Activated B cell treated with CpG ODN at 0.5 μM for 24 hours (primary cell): ENCODE measurements at regions of chr14 and their contacts with region 1.

Region 1: GRCh38 chr14:93939304-93940229 is 12.4 kb downstream of the FAM181A start:
- DNase-seq: peak; percentile 96
- ATAC-seq: peak; percentile 92
- H3K4me3 Mint-ChIP-seq: peak overlapping the region; percentile 69
- H3K27ac Mint-ChIP-seq: no peak overlapping the region
- H3K4me1 Mint-ChIP-seq: peaks cover 10% of the 10 kb centered on the region
- H3K27me3 Mint-ChIP-seq: peaks cover 5% of the 10 kb centered on the region
- CTCF ChIP-seq: peak; percentile 60

Region 2: GRCh38 chr14:93959239-93960107 is 19.9 kb after region 1 on chr14:
- CTCF ChIA-PET with region 1: interaction called, 126 read pairs
- POLR2A ChIA-PET with region 1: interaction called, 15 read pairs
- intact Hi-C with region 1: loop called (anchors 1 kb)
- DNase-seq: peak; percentile 81
- ATAC-seq: peak; percentile 75
- H3K4me3 Mint-ChIP-seq: peak overlapping the region; percentile 80
- H3K27ac Mint-ChIP-seq: peak overlapping the region; percentile 93
- H3K4me1 Mint-ChIP-seq: peaks cover 95% of the 10 kb centered on the region
- H3K27me3 Mint-ChIP-seq: no peaks in the 10 kb centered on the region
- CTCF ChIP-seq: no peak

Region 3: GRCh38 chr14:93989939-93990338 is 50.4 kb after region 1 on chr14:
- CTCF ChIA-PET with region 1: interaction called, 307 read pairs
- POLR2A ChIA-PET with region 1: no interaction called
- intact Hi-C with region 1: no loop called
- DNase-seq: no peak
- ATAC-seq: peak; percentile 70
- H3K4me3 Mint-ChIP-seq: no peak overlapping the region
- H3K27ac Mint-ChIP-seq: no peak overlapping the region
- H3K4me1 Mint-ChIP-seq: peaks cover 7% of the 10 kb centered on the region
- H3K27me3 Mint-ChIP-seq: peaks cover 24% of the 10 kb centered on the region
- CTCF ChIP-seq: no peak

Region 4: GRCh38 chr14:94036313-94037050 is 96.9 kb after region 1 on chr14:
- CTCF ChIA-PET with region 1: interaction called, 16 read pairs
- POLR2A ChIA-PET with region 1: no interaction called
- intact Hi-C with region 1: no loop called
- DNase-seq: peak; percentile 60
- ATAC-seq: peak; percentile 95
- H3K4me3 Mint-ChIP-seq: no peak overlapping the region
- H3K27ac Mint-ChIP-seq: no peak overlapping the region
- H3K4me1 Mint-ChIP-seq: no peaks in the 10 kb centered on the region
- H3K27me3 Mint-ChIP-seq: no peaks in the 10 kb centered on the region
- CTCF ChIP-seq: peak; percentile 21

Region 5: DNA sequence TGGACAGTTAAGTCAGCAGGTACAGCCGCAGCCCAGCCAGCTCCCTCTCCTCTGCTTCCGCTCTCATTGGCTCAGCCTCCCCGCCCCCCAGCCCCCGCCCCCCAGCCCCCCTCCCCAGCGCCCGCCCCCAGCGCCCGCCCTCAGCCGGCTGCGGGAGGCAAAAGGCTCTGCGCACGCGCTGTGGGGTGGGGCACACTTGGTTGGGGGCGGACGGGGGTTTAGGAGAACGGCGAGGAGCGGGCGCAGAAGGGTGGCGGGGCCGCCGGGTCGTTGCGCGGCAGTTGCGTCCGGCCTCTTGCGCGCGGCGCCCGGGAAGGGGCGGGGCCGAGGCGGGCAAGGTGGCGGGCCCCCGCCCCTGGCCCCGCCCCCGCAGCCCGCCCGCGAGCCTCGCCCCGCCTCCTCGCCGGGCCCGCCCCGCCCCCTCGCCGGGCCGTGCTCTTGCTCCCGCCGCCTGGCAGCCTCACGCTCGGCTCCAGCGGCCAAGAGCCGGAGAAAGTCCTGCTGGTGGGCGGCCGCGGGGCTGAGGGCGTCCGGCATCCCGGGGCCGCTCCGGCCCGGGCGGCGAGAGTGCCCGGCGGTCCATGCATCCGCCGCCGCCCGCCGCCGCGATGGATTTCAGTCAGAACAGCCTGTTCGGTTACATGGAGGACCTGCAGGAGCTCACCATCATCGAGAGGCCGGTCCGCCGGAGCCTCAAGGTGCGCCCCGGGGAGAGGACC is 234.5 kb after region 1 on chr14 and contains the start of gene PPP4R4:
- CTCF ChIA-PET with region 1: interaction called, 10 read pairs
- POLR2A ChIA-PET with region 1: interaction called, 4 read pairs
- intact Hi-C with region 1: loop called (anchors 1 kb)
- DNase-seq: peak; percentile 78
- ATAC-seq: peak; percentile 93
- H3K4me3 Mint-ChIP-seq: peak within 1 kb of the TSS; percentile 81
- H3K27ac Mint-ChIP-seq: no peak within 1 kb of the TSS
- H3K4me1 Mint-ChIP-seq: peaks cover 15% of the 10 kb centered on the region
- H3K27me3 Mint-ChIP-seq: peaks cover 43% of the 10 kb centered on the region
- CTCF ChIP-seq: no peak
- total RNA-seq, gene PPP4R4: 0.22 TPM in 1 of 2 replicates, not detected in the other

Region 6: DNA sequence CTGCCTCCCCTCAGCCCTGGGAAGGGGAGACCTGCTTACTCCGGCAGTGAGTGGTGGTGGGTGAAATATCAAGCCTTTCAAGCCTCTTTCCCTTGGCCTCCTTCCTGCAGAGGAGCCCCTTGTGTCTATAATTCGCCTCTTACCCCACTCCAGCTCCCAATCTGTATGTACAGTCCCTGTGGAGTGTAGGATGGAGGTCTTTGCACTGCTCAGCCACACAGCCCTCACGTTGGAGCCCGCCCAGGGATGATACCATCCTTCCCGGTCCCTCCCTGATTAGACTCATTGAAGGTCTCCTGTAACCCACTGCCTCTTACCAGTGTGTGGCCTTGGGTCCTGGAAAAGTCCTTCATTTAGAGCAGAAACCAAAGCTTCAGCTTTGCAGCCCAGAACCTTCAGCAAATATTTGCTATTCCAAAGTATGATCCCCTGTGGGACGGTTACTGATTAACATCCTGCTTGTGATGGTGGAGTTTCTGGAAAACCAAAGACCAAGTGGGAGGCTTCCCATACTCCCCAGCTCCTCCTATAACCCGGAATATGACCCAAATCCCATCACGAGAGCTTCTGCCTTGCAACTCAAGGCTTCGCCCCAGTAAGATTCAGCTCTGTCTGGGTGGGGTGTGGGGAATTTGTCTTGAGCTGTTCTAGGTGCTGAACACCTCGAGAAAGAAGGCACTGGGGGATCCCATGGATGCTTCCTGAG is 353.5 kb after region 1 on chr14 and contains the start of gene SERPINA10:
- CTCF ChIA-PET with region 1: no interaction called
- POLR2A ChIA-PET with region 1: no interaction called
- intact Hi-C with region 1: no loop called
- DNase-seq: no peak
- ATAC-seq: no peak
- H3K4me3 Mint-ChIP-seq: no peak within 1 kb of the TSS
- H3K27ac Mint-ChIP-seq: no peak within 1 kb of the TSS
- H3K4me1 Mint-ChIP-seq: no peaks in the 10 kb centered on the region
- H3K27me3 Mint-ChIP-seq: no peaks in the 10 kb centered on the region
- CTCF ChIP-seq: no peak
- total RNA-seq, gene SERPINA10: not detected in 2 replicates